ENCODE measurements at regions of chr1 and their contacts with region 1.

Region 1: DNA sequence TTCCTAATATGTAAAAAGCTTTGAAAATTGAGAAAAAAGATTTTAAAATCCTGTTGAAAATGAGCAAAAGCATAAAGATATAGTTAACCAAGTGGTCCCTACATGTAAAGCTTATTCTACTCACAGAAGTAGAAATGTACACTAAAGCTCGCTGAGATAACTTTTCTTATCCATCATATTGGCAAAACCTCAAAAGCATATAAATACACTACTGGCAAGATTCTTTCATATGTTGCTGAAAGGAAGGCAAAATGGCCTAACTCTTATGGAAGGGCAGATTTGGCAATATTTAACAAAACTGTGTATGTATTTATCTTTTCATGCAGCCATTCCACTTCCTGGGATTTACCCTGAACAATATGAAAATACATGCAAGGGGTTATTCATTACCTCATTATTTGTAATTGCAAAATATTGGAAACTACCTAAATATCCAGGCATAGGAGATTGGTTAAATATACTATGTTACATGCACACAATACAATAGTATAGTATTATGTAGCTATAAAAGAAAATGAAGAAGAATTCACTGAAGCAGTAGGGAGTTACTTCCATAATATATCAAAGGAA is 43.2 kb upstream of the LYPLAL1 start:
- DNase-seq: peak in 1 of 2 experiments; percentile 18
- ATAC-seq: no peak; a peak in 2 of 6 replicates
- H3K4me3 ChIP-seq: no peak overlapping the region
- H3K27ac ChIP-seq: no peak overlapping the region
- H3K4me1 ChIP-seq: peaks cover 8% of the 10 kb centered on the region; the same call in 1 of the 3 replicates
- CTCF ChIP-seq: no peak
- EP300 ChIP-seq: no peak
- POLR2A ChIP-seq: no peak
- RAD21 ChIP-seq: no peak

Region 2: GRCh38 chr1:218953386-218953785 is 177.1 kb before region 1 on chr1:
- CTCF ChIA-PET with region 1: no interaction called
- POLR2A ChIA-PET with region 1: interaction called, 11 read pairs
- DNase-seq: no peak
- ATAC-seq: no peak
- H3K4me3 ChIP-seq: no peak overlapping the region
- H3K27ac ChIP-seq: no peak overlapping the region
- H3K4me1 ChIP-seq: no peaks in the 10 kb centered on the region
- CTCF ChIP-seq: no peak
- EP300 ChIP-seq: no peak
- POLR2A ChIP-seq: no peak
- RAD21 ChIP-seq: no peak